ENCODE measurements at regions of chr17 and their contacts with region 1.

Region 1: GRCh38 chr17:17496189-17497064 is at the start of gene RASD1:
- DNase-seq: peak; percentile 79 to 90 (median 88)
- ATAC-seq: peak; percentile 96
- H3K4me3 ChIP-seq: peak within 1 kb of the TSS; percentile 55
- H3K27ac ChIP-seq: peak within 1 kb of the TSS; percentile 73; the same call in 1 of the 3 replicates
- H3K4me1 ChIP-seq: peaks cover 0 to 18% of the 10 kb centered on the region in 2 experiments; a peak in 3 of 5 replicates
- H3K27me3 ChIP-seq: peaks cover 0 to 16% of the 10 kb centered on the region in 2 experiments; a peak in 2 of 5 replicates
- CTCF ChIP-seq: peak; percentile 71 to 90 (median 72)
- EP300 ChIP-seq: no peak
- POLR2A ChIP-seq: 0 out of 2 replicates have a peak, but pooled peaks have one; percentile 36
- RAD21 ChIP-seq: peak; percentile 64 to 71
- polyA plus RNA-seq, gene RASD1: not detected

Region 2: GRCh38 chr17:17401271-17401781 is 95.1 kb before region 1 on chr17:
- CTCF ChIA-PET with region 1: no interaction called
- POLR2A ChIA-PET with region 1: no interaction called
- in situ Hi-C with region 1: no loop called
- intact Hi-C with region 1: no loop called
- DNase-seq: peak; percentile 30 to 55 (median 45)
- ATAC-seq: peak; percentile 93
- H3K4me3 ChIP-seq: no peak overlapping the region
- H3K27ac ChIP-seq: no peak overlapping the region
- H3K4me1 ChIP-seq: no peaks in the 10 kb centered on the region; a peak in 3 of 5 replicates
- H3K27me3 ChIP-seq: peaks cover 14 to 74% of the 10 kb centered on the region in 2 experiments
- CTCF ChIP-seq: peak; percentile 55 to 58 (median 57)
- EP300 ChIP-seq: no peak
- POLR2A ChIP-seq: no peak
- RAD21 ChIP-seq: peak in 1 of 2 experiments; percentile 43; a peak in 2 of 4 replicates

Region 3: GRCh38 chr17:17538417-17539391 is 42.3 kb after region 1 on chr17:
- CTCF ChIA-PET with region 1: no interaction called
- POLR2A ChIA-PET with region 1: no interaction called
- in situ Hi-C with region 1: no loop called
- intact Hi-C with region 1: no loop called
- DNase-seq: peak; percentile 17 to 63 (median 41)
- ATAC-seq: peak; percentile 59
- H3K4me3 ChIP-seq: no peak overlapping the region
- H3K27ac ChIP-seq: 0 out of 3 replicates have a peak overlapping the region, but pooled peaks have one; percentile 55
- H3K4me1 ChIP-seq: peaks cover 5 to 27% of the 10 kb centered on the region in 2 experiments; a peak in 4 of 5 replicates
- H3K27me3 ChIP-seq: no peaks in the 10 kb centered on the region
- CTCF ChIP-seq: no peak
- EP300 ChIP-seq: no peak
- POLR2A ChIP-seq: no peak
- RAD21 ChIP-seq: no peak

Region 4: GRCh38 chr17:17561408-17562145 is 65.2 kb after region 1 on chr17:
- CTCF ChIA-PET with region 1: no interaction called
- POLR2A ChIA-PET with region 1: no interaction called
- in situ Hi-C with region 1: loop called (anchors 5 kb)
- intact Hi-C with region 1: no loop called
- DNase-seq: no peak
- ATAC-seq: no peak
- H3K4me3 ChIP-seq: no peak overlapping the region
- H3K27ac ChIP-seq: no peak overlapping the region
- H3K4me1 ChIP-seq: peaks cover 0 to 4% of the 10 kb centered on the region in 2 experiments; a peak in 1 of 5 replicates
- H3K27me3 ChIP-seq: no peaks in the 10 kb centered on the region
- CTCF ChIP-seq: no peak
- EP300 ChIP-seq: no peak
- POLR2A ChIP-seq: no peak
- RAD21 ChIP-seq: no peak

Region 5: GRCh38 chr17:17568749-17569195 is 72.3 kb after region 1 on chr17:
- CTCF ChIA-PET with region 1: interaction called, 4 read pairs
- POLR2A ChIA-PET with region 1: interaction called, 3 read pairs
- in situ Hi-C with region 1: loop called (anchors 5 kb)
- intact Hi-C with region 1: loop called (anchors 2 kb)
- DNase-seq: peak; percentile 70 to 85 (median 84)
- ATAC-seq: peak; percentile 93
- H3K4me3 ChIP-seq: no peak overlapping the region
- H3K27ac ChIP-seq: no peak overlapping the region
- H3K4me1 ChIP-seq: peaks cover 0 to 4% of the 10 kb centered on the region in 2 experiments; a peak in 2 of 5 replicates
- H3K27me3 ChIP-seq: no peaks in the 10 kb centered on the region
- CTCF ChIP-seq: peak; percentile 75 to 85 (median 78)
- EP300 ChIP-seq: no peak
- POLR2A ChIP-seq: no peak
- RAD21 ChIP-seq: peak; percentile 41 to 65

Region 6: GRCh38 chr17:17636272-17636885 is 140.0 kb after region 1 on chr17:
- CTCF ChIA-PET with region 1: no interaction called
- POLR2A ChIA-PET with region 1: no interaction called
- in situ Hi-C with region 1: loop called (anchors 10 kb)
- intact Hi-C with region 1: loop called (anchors 5 kb)
- DNase-seq: no peak
- ATAC-seq: no peak
- H3K4me3 ChIP-seq: no peak overlapping the region
- H3K27ac ChIP-seq: no peak overlapping the region
- H3K4me1 ChIP-seq: no peaks in the 10 kb centered on the region; a peak in 1 of 5 replicates
- H3K27me3 ChIP-seq: peaks cover 0 to 12% of the 10 kb centered on the region in 2 experiments; a peak in 2 of 5 replicates
- CTCF ChIP-seq: no peak
- EP300 ChIP-seq: no peak
- POLR2A ChIP-seq: no peak
- RAD21 ChIP-seq: no peak

Region 7: DNA sequence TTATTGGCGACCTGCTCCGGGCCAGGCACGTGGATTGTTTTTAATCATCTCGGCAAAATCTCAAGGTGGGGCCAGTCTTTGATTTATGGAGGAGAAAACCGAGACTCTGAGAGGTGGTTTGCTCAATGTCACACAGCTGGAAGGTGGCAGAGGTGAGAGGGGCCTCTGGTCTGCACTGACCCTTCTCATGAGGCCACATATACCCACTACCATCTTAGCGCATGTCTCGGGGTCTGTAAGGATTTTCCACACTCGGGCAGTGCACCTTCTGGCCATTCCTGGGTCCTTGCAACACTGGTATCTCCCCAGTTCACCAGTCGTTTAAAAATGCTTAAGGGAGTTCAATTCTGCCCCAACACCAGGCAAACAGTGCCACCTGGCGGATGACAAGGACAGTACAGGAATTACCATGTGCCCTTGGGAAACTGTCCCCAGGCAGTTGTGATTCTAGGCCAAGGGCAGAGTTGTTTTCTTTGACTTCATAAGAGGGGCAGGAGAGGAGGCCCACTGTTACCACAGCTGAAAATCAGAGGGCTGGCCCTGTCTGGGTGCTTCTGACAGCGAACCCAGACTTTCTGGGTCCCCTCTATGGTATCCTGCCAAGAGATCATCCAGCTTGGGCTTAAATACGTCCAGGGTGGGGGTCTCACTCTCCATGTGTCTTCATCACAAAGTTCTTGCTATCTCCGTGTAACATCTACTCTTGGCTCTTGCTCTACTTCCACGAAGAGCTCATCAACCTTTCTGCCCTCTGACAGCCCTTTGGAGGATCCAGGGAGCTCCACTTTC is 145.4 kb after region 1 on chr17:
- CTCF ChIA-PET with region 1: interaction called, 3 read pairs
- POLR2A ChIA-PET with region 1: no interaction called
- in situ Hi-C with region 1: loop called (anchors 10 kb)
- intact Hi-C with region 1: loop called (anchors 5 kb)
- DNase-seq: peak; percentile 50 to 80 (median 58)
- ATAC-seq: peak; percentile 95
- H3K4me3 ChIP-seq: no peak overlapping the region
- H3K27ac ChIP-seq: no peak overlapping the region
- H3K4me1 ChIP-seq: no peaks in the 10 kb centered on the region; a peak in 1 of 5 replicates
- H3K27me3 ChIP-seq: peaks cover 0 to 6% of the 10 kb centered on the region in 2 experiments; a peak in 2 of 5 replicates
- CTCF ChIP-seq: peak; percentile 82 to 89 (median 87)
- EP300 ChIP-seq: no peak
- POLR2A ChIP-seq: no peak
- RAD21 ChIP-seq: peak; percentile 83 to 93

Region 8: DNA sequence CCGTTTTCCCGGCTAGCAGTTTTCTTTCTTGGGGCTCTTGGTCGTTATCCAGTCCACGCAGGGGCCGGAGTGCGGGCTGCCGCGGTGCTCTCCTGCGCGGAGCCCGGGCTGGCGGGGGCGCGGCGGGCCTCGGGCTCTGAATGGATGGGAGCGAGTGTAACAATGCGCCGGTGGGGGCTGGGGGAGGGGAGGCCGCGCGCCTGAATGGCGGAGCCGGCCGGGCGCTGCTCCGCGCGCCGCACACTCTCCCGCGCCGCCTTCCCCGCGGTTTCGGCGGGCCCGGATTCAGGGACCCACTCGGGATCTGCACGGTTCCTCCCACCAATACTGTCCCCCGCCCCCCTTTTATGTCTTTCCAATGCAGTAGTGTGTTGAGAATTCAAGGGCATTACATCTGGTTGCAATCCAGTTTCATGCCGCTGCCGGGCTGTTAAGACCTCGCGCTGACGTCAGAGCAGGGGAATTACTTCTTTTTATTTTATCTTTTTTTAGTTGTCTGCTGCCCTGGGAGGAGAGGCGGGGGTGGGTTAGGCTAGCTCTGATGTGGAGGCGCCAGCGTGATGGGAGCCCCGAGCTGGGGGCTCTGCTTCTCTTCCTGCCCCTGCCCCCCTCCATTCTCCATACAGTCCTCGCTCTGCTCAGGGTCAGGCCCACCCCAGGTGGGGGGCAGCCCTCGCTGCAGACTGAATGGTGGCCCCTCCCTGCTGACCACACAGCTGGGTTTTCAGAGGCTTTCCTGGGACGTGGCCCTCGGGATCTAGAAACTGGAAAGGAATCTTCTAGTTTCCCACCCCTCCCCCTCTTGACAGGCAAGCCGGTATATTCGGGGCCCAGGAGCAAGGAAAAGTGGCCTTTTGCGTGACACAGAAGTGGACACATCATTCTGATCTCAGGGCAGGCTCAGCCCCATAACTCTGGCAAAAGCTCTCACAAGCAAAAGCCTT is 186.6 kb after region 1 on chr17:
- CTCF ChIA-PET with region 1: no interaction called
- POLR2A ChIA-PET with region 1: no interaction called
- in situ Hi-C with region 1: no loop called
- intact Hi-C with region 1: no loop called
- DNase-seq: peak; percentile 27 to 73 (median 48)
- ATAC-seq: peak; percentile 84
- H3K4me3 ChIP-seq: peak overlapping the region; percentile 70
- H3K27ac ChIP-seq: peak overlapping the region; percentile 89
- H3K4me1 ChIP-seq: peaks cover 22 to 47% of the 10 kb centered on the region in 2 experiments
- H3K27me3 ChIP-seq: no peaks in the 10 kb centered on the region
- CTCF ChIP-seq: no peak
- EP300 ChIP-seq: no peak
- POLR2A ChIP-seq: 0 out of 2 replicates have a peak, but pooled peaks have one; percentile 57
- RAD21 ChIP-seq: no peak

Measured in K562 (cell line).